CD4-positive, alpha-beta T cell (primary cell): ENCODE measurements at regions of chr9 and their contacts with region 1.

Region 1: DNA sequence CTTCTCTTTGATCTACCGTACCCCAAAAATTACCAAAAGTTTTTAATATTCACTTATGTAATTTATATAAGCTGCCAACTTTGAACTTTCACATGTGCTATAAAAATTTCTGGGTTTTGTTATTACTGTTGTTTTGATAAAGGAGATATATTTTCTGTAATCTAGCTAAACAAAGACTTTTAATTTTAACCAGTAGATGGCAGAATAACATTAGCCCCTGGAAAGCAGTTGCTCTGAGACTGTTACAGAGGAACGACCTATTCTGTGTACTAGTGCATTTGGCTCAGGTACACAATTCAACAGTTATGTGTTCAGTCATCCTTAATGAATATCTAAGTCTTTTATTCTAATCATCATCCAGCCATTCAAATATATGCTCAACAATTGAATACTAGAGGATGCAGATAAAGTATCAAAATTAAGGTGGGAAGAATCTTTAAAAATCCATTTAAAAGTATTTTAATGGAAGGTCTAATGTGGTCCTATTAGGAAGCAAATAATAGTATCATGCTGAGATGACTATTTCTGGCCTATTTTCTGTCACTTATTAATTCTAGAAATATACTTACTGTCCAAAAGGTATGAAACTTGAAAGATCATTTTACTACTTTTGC is 8.6 kb downstream of the KLHL9 start:
- DNase-seq: peak in 3 of 14 experiments; percentile 76 to 77 (median 76)
- ATAC-seq: peak; percentile 91
- H3K4me3 ChIP-seq: no peak overlapping the region
- H3K4me3 Mint-ChIP-seq: peak overlapping the region; percentile 60
- H3K27ac ChIP-seq: no peak overlapping the region
- H3K27ac Mint-ChIP-seq: peak overlapping the region; percentile 7
- H3K4me1 ChIP-seq: peaks cover 6% of the 10 kb centered on the region
- H3K4me1 Mint-ChIP-seq: peaks cover 70% of the 10 kb centered on the region
- H3K27me3 ChIP-seq: no peaks in the 10 kb centered on the region
- H3K27me3 Mint-ChIP-seq: no peaks in the 10 kb centered on the region
- CTCF ChIP-seq: peak; percentile 79

Region 2: DNA sequence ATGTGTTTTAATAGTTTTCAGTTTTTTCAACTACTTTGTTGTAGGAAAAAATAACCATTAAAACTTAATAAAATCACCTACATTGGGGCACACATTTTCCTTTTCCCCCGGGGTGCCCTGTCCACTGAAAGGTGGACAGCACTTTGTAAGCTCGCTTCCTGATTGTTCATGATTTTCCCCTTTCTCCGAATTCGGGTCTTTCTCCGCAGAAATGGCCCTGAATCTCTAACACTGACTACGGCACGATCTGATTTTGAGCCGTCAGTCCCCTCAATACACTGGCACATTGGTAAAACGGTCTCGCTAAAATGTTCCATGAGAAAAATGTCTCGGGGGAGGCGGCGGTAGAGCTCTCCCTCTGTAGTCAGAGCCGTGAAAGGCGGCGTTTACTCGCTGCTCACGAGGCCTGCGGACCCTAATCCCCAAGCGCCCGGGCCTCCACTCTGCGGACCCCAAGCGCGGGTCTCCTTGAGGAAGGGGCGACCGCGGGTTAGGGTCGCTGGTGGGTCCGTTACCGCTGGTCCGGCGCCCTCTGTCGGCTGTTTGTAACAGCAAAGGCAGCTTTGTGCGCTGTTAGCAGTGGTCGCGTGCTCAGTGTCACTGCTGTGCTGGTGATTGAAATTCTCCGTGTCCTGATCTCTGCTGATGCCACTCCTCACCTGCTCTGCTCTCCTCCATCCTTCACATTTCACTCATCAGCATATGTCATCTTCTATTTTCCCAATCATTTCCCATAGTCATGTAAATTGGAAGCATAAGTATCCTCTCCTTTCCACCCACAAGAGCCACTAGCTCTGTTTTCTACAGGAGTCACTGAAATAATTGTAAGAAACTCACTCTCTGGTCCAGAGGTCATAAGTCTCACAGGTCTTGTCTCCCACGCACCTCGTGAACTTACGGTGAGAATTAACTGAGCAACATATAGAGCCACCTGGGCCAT is 69.4 kb after region 1 on chr9:
- CTCF ChIA-PET with region 1: interaction called, 34 read pairs
- POLR2A ChIA-PET with region 1: interaction called, 17 read pairs
- intact Hi-C with region 1: loop called (anchors 1 kb)
- DNase-seq: peak; percentile 28 to 76 (median 51)
- ATAC-seq: peak; percentile 76
- H3K4me3 ChIP-seq: peak overlapping the region; percentile 39
- H3K4me3 Mint-ChIP-seq: peak overlapping the region; percentile 66
- H3K27ac ChIP-seq: no peak overlapping the region
- H3K27ac Mint-ChIP-seq: no peak overlapping the region
- H3K4me1 ChIP-seq: peaks cover 8% of the 10 kb centered on the region
- H3K4me1 Mint-ChIP-seq: peaks cover 9% of the 10 kb centered on the region
- H3K27me3 ChIP-seq: peaks cover 11 to 35% of the 10 kb centered on the region in 2 experiments
- H3K27me3 Mint-ChIP-seq: peaks cover 70% of the 10 kb centered on the region
- CTCF ChIP-seq: peak; percentile 95

Region 3: DNA sequence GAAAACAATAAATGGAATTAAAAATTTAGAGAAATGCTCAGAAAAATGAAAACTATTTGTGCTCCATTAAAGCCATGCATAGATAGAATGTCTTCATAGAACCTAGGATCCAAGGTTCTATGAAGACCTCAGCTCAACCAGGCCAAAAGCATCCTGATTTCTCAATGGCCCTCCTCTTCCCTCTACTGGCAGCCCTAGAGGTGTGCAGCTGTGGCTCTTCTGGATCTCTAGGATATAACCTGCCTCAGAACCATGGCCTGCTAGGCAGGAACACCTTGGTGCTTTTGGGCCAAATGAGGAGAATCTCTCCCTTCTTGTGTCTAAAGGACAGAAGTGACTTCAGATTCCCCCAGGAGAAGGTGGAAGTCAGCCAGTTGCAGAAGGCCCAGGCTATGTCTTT is 128.7 kb after region 1 on chr9:
- CTCF ChIA-PET with region 1: interaction called, 13 read pairs
- POLR2A ChIA-PET with region 1: interaction called, 4 read pairs
- intact Hi-C with region 1: loop called (anchors 1 to 5 kb)
- DNase-seq: peak in 6 of 14 experiments; percentile 2 to 69 (median 39)
- ATAC-seq: peak; percentile 89
- H3K4me3 ChIP-seq: no peak overlapping the region
- H3K4me3 Mint-ChIP-seq: no peak overlapping the region
- H3K27ac ChIP-seq: no peak overlapping the region
- H3K27ac Mint-ChIP-seq: no peak overlapping the region
- H3K4me1 ChIP-seq: no peaks in the 10 kb centered on the region
- H3K4me1 Mint-ChIP-seq: no peaks in the 10 kb centered on the region
- H3K27me3 ChIP-seq: no peaks in the 10 kb centered on the region
- H3K27me3 Mint-ChIP-seq: peaks cover 24% of the 10 kb centered on the region
- CTCF ChIP-seq: peak; percentile 56

Region 4: GRCh38 chr9:21585756-21586752 is 259.4 kb after region 1 on chr9:
- CTCF ChIA-PET with region 1: no interaction called
- POLR2A ChIA-PET with region 1: no interaction called
- intact Hi-C with region 1: loop called in 1 of 2 experiments (anchors 10 kb)
- DNase-seq: no peak
- ATAC-seq: no peak
- H3K4me3 ChIP-seq: no peak overlapping the region
- H3K4me3 Mint-ChIP-seq: no peak overlapping the region
- H3K27ac ChIP-seq: no peak overlapping the region
- H3K27ac Mint-ChIP-seq: no peak overlapping the region
- H3K4me1 ChIP-seq: no peaks in the 10 kb centered on the region
- H3K4me1 Mint-ChIP-seq: peaks cover 5% of the 10 kb centered on the region
- H3K27me3 ChIP-seq: no peaks in the 10 kb centered on the region
- H3K27me3 Mint-ChIP-seq: no peaks in the 10 kb centered on the region
- CTCF ChIP-seq: no peak

Region 5: GRCh38 chr9:21709464-21710058 is 382.9 kb after region 1 on chr9:
- CTCF ChIA-PET with region 1: interaction called, 3 read pairs
- POLR2A ChIA-PET with region 1: no interaction called
- intact Hi-C with region 1: loop called (anchors 5 to 10 kb)
- DNase-seq: peak; percentile 15 to 77 (median 52)
- ATAC-seq: peak; percentile 72
- H3K4me3 ChIP-seq: no peak overlapping the region
- H3K4me3 Mint-ChIP-seq: no peak overlapping the region
- H3K27ac ChIP-seq: no peak overlapping the region
- H3K27ac Mint-ChIP-seq: no peak overlapping the region
- H3K4me1 ChIP-seq: peaks cover 4% of the 10 kb centered on the region
- H3K4me1 Mint-ChIP-seq: peaks cover 26% of the 10 kb centered on the region
- H3K27me3 ChIP-seq: no peaks in the 10 kb centered on the region
- H3K27me3 Mint-ChIP-seq: no peaks in the 10 kb centered on the region
- CTCF ChIP-seq: peak; percentile 95

Region 6: DNA sequence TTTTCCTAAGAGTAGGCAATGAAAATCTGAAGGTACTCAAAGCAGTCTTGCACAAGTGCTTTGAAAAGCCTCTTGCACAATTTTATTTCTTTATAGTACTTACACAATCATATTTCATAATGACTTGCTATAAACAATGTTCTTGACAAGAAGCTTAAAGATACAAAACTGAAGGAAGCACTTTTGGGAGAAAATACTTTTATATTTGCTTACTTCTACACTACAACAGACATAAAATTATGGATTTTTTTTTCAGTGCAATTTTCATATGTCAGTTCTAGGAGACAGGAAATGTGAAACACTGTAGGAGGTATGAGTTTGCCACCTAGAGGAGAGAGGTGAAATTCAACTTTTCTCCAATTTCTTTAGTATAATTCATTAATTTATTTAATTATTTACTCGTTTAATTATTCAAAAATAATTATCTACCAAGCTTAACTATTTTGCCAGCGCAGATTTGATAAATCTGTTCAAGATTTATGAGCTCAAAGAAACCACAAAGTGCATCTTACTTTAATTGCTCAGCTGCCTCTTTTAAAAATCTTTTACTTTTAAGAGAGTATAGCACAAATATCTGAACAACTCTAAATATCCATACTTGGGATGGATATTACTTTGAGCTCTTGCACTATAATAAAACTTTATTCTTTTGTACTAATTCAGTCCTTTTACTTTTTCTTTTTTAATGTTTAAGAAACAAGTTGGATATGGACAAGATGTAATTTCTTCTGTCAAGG is 711.5 kb after region 1 on chr9:
- CTCF ChIA-PET with region 1: no interaction called
- POLR2A ChIA-PET with region 1: no interaction called
- intact Hi-C with region 1: loop called in 1 of 2 experiments (anchors 10 kb)
- DNase-seq: peak in 3 of 14 experiments; percentile 48 to 54 (median 51)
- ATAC-seq: peak; percentile 49
- H3K4me3 ChIP-seq: no peak overlapping the region
- H3K4me3 Mint-ChIP-seq: no peak overlapping the region
- H3K27ac ChIP-seq: no peak overlapping the region
- H3K27ac Mint-ChIP-seq: no peak overlapping the region
- H3K4me1 ChIP-seq: no peaks in the 10 kb centered on the region
- H3K4me1 Mint-ChIP-seq: no peaks in the 10 kb centered on the region
- H3K27me3 ChIP-seq: no peaks in the 10 kb centered on the region
- H3K27me3 Mint-ChIP-seq: no peaks in the 10 kb centered on the region
- CTCF ChIP-seq: peak; percentile 72